Colonic mucosa (tissue), 4 donors: ENCODE measurements at regions of chr2 and their contacts with region 1.

Region 1: GRCh38 chr2:9142551-9143263 is 63.9 kb upstream of the ASAP2 start:
- DNase-seq: peak; percentile 93
- H3K4me3 ChIP-seq: peak overlapping the region; percentile 22
- H3K27ac ChIP-seq: no peak overlapping the region
- H3K4me1 ChIP-seq: peaks cover 7% of the 10 kb centered on the region
- H3K27me3 ChIP-seq: no peaks in the 10 kb centered on the region
- CTCF ChIP-seq: peak; percentile 97

Region 2: DNA sequence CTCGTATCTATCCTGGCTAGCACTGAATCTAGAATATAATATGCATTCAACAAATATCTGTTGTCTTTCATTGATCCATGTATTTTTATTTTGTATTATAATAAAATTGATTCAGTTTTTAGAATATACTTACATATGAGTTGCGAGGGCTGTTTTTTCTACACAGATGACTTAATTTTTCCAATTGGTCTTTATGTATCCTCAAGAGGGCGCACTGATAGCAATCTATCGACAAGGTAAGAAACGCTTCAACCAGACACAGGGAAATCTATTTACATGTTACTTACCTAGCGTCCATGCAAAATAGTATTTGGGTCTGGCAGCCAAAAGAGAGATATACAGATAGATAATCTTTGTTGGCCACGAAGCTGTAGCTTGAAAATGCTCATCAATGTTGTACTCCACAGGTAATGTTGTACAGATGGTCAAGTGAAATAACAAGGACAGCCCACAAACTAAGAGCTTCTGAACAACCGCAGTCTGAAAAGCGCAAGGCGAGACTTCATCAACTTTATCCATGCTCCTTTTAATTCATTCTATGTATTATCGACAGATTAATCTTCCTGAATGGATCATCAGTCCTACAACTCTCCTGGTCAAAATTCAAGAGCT is 269.8 kb before region 1 on chr2:
- intact Hi-C with region 1: loop called (anchors 5 kb)
- DNase-seq: no peak
- H3K4me3 ChIP-seq: no peak overlapping the region
- H3K27ac ChIP-seq: no peak overlapping the region
- H3K4me1 ChIP-seq: no peaks in the 10 kb centered on the region
- H3K27me3 ChIP-seq: no peaks in the 10 kb centered on the region
- CTCF ChIP-seq: peak; percentile 46